K562 (cell line): ENCODE measurements at regions of chr6 and their contacts with region 1.

Region 1: DNA sequence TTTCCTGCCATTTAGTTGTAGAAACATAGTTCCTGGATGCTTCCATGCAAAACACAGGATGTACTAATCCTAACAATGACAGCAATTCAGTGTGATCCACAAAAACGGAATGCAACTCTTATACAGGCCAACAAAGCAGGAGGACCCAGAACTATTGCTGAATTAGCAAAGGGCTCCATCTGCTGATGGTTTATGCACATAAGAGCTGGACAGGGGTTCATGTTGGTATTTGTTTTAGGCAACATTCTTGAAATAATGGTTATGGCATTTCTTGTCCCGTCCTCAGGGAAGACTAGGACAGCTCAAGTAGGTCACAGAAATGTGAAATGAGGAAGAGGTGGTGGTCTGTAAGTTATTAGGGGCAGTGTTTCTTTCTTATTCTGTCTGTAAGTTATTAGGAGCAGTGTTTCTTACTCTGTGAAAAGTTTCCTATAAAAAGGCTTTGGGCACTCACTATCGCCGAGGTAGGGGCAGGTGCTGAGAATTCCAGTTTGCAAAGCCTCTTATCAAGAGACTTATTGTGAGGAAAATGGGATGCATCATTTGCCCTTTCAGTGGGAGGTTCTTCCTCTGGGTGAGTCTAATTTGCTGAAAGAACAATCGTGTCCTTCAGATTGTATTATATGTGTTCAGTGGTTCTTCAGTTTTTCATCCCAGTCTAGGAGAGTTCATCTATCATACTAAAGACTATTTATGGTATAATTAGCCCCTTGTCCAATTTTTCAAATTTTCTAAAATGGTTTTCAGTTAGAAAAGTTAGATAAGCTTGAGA is 171.1 kb downstream of the MCHR2 start:
- DNase-seq: peak; percentile 25 to 59 (median 36)
- ATAC-seq: peak; percentile 99
- H3K4me3 ChIP-seq: no peak overlapping the region
- H3K27ac ChIP-seq: no peak overlapping the region
- H3K4me1 ChIP-seq: no peaks in the 10 kb centered on the region; a peak in 1 of 5 replicates
- H3K27me3 ChIP-seq: peaks cover 0 to 4% of the 10 kb centered on the region in 2 experiments; a peak in 4 of 5 replicates
- CTCF ChIP-seq: peak; percentile 57 to 69 (median 69)
- EP300 ChIP-seq: no peak
- POLR2A ChIP-seq: no peak
- RAD21 ChIP-seq: peak; percentile 67 to 77

Region 2: GRCh38 chr6:99282491-99283062 is 540.4 kb before region 1 on chr6:
- CTCF ChIA-PET with region 1: no interaction called
- POLR2A ChIA-PET with region 1: no interaction called
- in situ Hi-C with region 1: no loop called
- intact Hi-C with region 1: loop called (anchors 5 kb)
- DNase-seq: peak in 3 of 4 experiments; percentile 14 to 18 (median 16)
- ATAC-seq: peak; percentile 62; the same call in 2 of the 3 replicates
- H3K4me3 ChIP-seq: no peak overlapping the region
- H3K27ac ChIP-seq: no peak overlapping the region
- H3K4me1 ChIP-seq: no peaks in the 10 kb centered on the region
- H3K27me3 ChIP-seq: no peaks in the 10 kb centered on the region
- CTCF ChIP-seq: peak; percentile 17 to 60 (median 28); a peak in 3 of 6 replicates
- EP300 ChIP-seq: no peak
- POLR2A ChIP-seq: no peak
- RAD21 ChIP-seq: peak; percentile 24 to 52; a peak in 3 of 4 replicates

Region 3: DNA sequence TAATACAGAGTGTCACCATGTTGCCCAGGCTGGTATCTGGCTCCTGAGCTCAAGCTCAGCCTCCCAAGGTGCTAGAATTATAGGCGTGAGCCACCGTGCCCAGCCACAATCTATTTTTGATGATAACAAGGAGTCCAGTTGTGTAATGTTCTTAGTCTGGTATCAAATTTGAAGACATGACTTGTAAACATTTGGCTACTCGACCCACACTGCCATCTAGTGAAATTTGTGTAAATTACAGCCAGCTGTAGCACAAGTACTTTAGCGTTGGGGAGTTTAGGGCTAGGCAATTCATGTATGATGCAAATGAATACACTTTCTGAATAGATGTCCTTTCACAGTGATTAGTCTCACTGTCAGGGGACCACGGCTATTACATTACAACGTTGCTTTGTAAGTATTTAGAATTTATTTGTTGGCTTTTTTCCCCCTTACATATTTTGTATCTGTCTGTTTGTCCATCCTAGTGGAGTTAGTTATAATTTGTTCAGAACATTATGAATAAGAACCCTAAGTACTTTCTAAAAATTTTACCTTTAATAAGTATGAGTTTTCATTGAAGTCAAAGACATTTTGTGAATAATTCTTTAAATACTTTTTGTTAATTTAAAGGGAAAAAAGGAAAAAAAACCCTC is 76.5 kb before region 1 on chr6:
- CTCF ChIA-PET with region 1: no interaction called
- POLR2A ChIA-PET with region 1: no interaction called
- in situ Hi-C with region 1: no loop called
- intact Hi-C with region 1: loop called (anchors 2 kb)
- DNase-seq: peak; percentile 38 to 74 (median 41)
- ATAC-seq: peak; percentile 93
- H3K4me3 ChIP-seq: no peak overlapping the region
- H3K27ac ChIP-seq: no peak overlapping the region
- H3K4me1 ChIP-seq: no peaks in the 10 kb centered on the region
- H3K27me3 ChIP-seq: no peaks in the 10 kb centered on the region
- CTCF ChIP-seq: peak; percentile 68 to 81 (median 80)
- EP300 ChIP-seq: no peak
- POLR2A ChIP-seq: no peak
- RAD21 ChIP-seq: peak; percentile 83 to 86

Region 4: DNA sequence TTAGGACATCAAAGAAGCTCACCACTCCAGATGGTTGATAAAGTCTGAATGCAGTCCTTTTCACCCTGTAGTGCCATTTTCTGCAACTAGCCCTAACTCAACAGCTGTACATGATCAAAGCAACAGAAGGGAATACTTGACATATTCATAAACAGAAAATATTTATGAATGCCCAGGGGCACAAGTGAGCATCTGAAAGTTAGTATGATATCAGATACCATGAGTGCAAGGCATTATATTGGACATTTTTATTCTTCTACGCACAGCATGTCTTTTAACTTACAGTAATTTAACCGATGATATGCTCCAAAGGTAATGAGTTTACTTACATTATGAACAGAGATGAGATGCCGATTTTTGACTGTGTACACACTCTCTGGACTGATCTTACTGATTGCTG is 29.1 kb after region 1 on chr6:
- CTCF ChIA-PET with region 1: no interaction called
- POLR2A ChIA-PET with region 1: no interaction called
- in situ Hi-C with region 1: no loop called
- intact Hi-C with region 1: no loop called
- DNase-seq: no peak
- ATAC-seq: no peak
- H3K4me3 ChIP-seq: no peak overlapping the region
- H3K27ac ChIP-seq: no peak overlapping the region
- H3K4me1 ChIP-seq: no peaks in the 10 kb centered on the region
- H3K27me3 ChIP-seq: no peaks in the 10 kb centered on the region
- CTCF ChIP-seq: no peak
- EP300 ChIP-seq: no peak
- POLR2A ChIP-seq: no peak
- RAD21 ChIP-seq: no peak

Region 5: GRCh38 chr6:100518579-100518978 is 695.7 kb after region 1 on chr6:
- CTCF ChIA-PET with region 1: no interaction called
- POLR2A ChIA-PET with region 1: no interaction called
- in situ Hi-C with region 1: no loop called
- intact Hi-C with region 1: no loop called
- DNase-seq: no peak
- ATAC-seq: no peak
- H3K4me3 ChIP-seq: no peak overlapping the region
- H3K27ac ChIP-seq: no peak overlapping the region
- H3K4me1 ChIP-seq: no peaks in the 10 kb centered on the region
- H3K27me3 ChIP-seq: no peaks in the 10 kb centered on the region
- CTCF ChIP-seq: no peak
- EP300 ChIP-seq: no peak
- POLR2A ChIP-seq: no peak
- RAD21 ChIP-seq: no peak